ENCODE measurements at regions of chr14 and their contacts with region 1.

Region 1: DNA sequence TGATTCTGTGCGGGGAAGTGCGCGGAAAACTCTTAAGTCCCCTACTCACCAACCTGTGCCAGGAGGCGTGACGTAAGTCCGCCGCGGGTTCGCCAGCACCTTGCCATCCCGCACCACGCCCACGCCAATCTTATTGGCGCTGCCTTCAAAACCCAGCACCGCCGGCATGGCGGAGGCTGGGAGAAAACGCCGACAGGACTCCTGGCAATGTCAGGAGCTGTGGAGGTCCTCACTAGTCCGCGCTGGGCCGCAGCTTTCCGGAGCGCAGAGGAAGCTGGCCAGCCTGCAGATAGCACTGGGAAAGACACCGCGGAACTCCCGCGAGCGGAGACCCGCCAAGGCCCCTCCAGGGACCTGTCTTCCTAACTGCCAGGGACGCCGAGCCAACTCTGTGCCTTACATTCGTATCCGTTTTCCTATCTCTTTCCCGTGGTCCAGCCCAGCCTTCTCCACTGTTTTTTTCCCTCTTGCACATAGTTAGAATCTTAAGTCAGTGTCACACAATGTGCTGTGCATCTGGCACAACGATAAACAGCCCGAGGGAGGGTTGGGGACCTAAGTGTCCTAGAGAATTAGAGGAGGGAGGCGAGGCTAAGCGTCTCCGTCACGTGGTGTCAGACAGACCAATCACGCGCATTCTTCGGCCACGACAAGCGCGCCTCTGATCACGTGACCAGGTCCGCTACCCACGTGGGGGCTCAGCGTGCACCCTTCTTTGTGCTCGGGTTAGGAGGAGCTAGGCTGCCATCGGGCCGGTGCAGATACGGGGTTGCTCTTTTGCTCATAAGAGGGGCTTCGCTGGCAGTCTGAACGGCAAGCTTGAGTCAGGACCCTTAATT is at the starts of genes APEX1 and OSGEP:
- DNase-seq: peak; percentile 96 to 99 (median 98)
- H3K4me3 ChIP-seq: peak within 1 kb of the TSS; percentile 70 to 99
- H3K4me3 Mint-ChIP-seq: peak within 1 kb of the TSS in 2 of 8 donors; percentile 13 to 23
- H3K27ac ChIP-seq: peak within 1 kb of the TSS; percentile 89
- H3K27ac Mint-ChIP-seq: peak within 1 kb of the TSS in 2 of 7 donors; percentile 19 to 55
- H3K4me1 ChIP-seq: peaks cover 53% of the 10 kb centered on the region
- H3K4me1 Mint-ChIP-seq: peaks cover 5 to 21% (median 12%) of the 10 kb centered on the region in 4 donors
- H3K27me3 ChIP-seq: no peaks in the 10 kb centered on the region
- H3K27me3 Mint-ChIP-seq: no peaks in the 10 kb centered on the region
- total RNA-seq, gene APEX1: 102 to 105 TPM
- total RNA-seq, gene OSGEP: 72.3 to 75.9 TPM

Region 2: DNA sequence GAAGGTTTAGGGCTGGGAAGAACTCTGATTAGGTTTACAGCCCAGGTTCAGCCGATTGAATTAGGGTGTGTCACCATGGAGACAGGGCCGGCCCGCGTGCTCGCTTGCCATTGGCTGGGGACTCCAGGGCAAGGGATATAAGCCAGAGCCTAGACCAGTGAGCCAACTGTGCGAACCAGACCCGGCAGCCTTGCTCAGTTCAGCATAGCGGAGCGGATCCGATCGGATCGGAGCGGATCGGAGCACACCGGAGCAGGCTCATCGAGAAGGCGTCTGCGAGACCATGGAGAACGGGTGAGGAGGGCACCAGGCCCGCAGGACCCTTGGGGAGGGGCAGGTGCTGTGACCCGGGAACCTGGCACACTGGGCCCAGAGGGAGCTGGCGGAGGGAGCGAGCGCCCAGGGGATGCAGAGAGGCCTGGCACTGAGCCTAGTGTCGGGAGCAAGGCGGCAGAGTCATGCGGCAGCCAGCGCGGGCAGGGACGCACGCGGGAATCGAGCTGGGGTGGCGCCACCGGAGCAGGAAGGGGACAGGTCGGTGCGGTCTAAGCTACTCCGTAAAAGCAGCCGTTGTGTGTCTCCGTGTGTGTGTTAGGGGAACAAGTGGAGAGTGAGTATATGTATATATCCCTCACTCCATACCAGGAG is 14.6 kb after region 1 on chr14 and contains the start of gene PNP:
- CTCF ChIA-PET with region 1: interaction called, 12 read pairs
- POLR2A ChIA-PET with region 1: interaction called, 119 read pairs
- intact Hi-C with region 1: loop called (anchors 1 kb)
- DNase-seq: peak; percentile 84 to 92 (median 88)
- H3K4me3 ChIP-seq: peak within 1 kb of the TSS; percentile 84 to 92
- H3K4me3 Mint-ChIP-seq: peak within 1 kb of the TSS; percentile 97 to 100 (median 99)
- H3K27ac ChIP-seq: peak within 1 kb of the TSS; percentile 77
- H3K27ac Mint-ChIP-seq: peak within 1 kb of the TSS; percentile 94 to 99 (median 98)
- H3K4me1 ChIP-seq: peaks cover 47% of the 10 kb centered on the region
- H3K4me1 Mint-ChIP-seq: peaks cover 33 to 55% (median 43%) of the 10 kb centered on the region in 4 donors
- H3K27me3 ChIP-seq: no peaks in the 10 kb centered on the region
- H3K27me3 Mint-ChIP-seq: no peaks in the 10 kb centered on the region
- total RNA-seq, gene PNP: 106 to 108 TPM

Region 3: DNA sequence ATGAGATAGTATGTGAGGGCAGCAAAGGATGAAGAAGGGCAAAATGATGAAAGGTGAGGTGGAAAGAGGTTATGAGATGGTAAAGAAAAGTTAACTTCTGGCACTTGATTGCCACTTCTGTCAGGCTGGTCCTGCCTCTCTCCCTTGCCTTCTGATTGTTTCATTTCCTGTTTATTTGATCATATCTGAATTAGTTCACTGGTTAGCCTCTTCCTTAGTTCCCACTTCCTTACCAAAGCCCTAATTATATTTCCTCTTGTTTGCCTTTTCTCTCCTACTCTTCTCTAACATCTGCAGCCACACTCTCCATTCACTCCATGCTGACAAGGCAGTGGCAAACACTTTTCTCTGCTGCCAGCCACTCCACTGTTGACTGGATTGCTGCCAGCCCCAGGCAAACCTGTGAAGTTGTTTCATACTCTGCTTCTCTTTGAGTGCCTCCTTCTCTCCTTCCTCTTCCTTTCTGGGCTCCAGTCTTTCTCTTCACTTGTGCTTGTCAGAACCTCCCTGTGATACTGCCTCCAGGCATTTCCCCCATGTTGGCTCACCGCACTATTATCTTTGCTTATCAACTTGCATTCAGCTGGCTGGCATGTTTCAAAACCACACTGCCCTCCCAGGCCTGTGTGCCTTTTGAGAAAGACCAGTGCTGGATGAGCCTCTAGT is 22.6 kb after region 1 on chr14:
- CTCF ChIA-PET with region 1: interaction called, 5 read pairs
- POLR2A ChIA-PET with region 1: interaction called, 119 read pairs
- intact Hi-C with region 1: no loop called
- DNase-seq: peak; percentile 55 to 67 (median 62)
- H3K4me3 ChIP-seq: peak overlapping the region in 1 of 2 donors; percentile 42
- H3K4me3 Mint-ChIP-seq: peak overlapping the region; percentile 66 to 87 (median 80)
- H3K27ac ChIP-seq: peak overlapping the region; percentile 51
- H3K27ac Mint-ChIP-seq: peak overlapping the region; percentile 84 to 97 (median 90)
- H3K4me1 ChIP-seq: peaks cover 98% of the 10 kb centered on the region
- H3K4me1 Mint-ChIP-seq: peaks cover 57 to 94% (median 76%) of the 10 kb centered on the region in 4 donors
- H3K27me3 ChIP-seq: no peaks in the 10 kb centered on the region
- H3K27me3 Mint-ChIP-seq: no peaks in the 10 kb centered on the region

Measured in CD4-positive, alpha-beta memory T cell (primary cell).